Left cardiac atrium (tissue), 4 donors: ENCODE measurements at regions of chr10 and their contacts with region 1.

Region 1: GRCh38 chr10:15824498-15824897 is 35.8 kb downstream of the MINDY3 start:
- DNase-seq: no peak
- ATAC-seq: no peak

Region 2: GRCh38 chr10:15439341-15439842 is 385.1 kb before region 1 on chr10:
- intact Hi-C with region 1: loop called (anchors 5 kb)
- DNase-seq: peak; percentile 77
- ATAC-seq: peak; percentile 82 to 93

Region 3: DNA sequence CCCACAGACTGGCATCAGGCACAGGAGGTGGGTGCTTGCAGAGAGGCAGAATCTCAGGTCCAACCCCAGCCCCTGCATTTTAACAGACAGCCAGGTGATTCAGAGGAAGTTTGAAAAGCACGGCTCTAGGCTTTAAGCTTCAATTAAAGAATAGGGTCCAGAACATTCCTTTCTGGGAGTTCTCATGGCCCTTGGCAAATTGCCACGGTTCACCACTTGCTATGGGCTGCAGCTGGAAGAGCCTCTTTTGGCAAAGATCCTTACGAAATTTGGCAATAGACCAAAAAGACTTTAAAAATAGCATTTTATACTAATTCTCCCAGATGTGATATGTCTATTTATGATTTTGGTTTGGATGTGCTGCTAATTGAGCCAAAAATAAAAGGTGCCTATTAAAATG is 252.9 kb before region 1 on chr10:
- intact Hi-C with region 1: no loop called
- DNase-seq: peak; percentile 58
- ATAC-seq: no peak